Posterior vena cava (tissue), 2 donors: ENCODE measurements at regions of chr5 and their contacts with region 1.

Region 1: DNA sequence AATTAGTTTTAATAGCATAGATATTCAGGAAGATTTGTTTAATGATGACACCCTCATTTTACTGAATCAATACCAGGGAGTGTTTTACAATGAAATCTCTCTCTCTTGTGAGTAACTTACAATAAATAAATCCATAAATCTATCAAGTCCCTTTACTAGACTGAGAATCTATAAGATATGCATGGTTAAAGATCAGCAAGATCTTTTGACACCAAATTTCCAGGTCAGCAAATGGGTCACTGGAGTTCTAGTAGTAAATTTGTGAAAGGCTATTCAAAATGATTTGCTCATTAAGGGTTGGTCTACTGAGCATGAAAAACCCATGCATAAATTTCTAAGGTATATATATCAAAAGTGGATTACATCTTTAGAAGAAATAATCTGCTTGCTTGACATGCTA is 512.1 kb upstream of the ITGA1 start:
- DNase-seq: no peak

Region 2: GRCh38 chr5:51389582-51390541 is 885.8 kb before region 1 on chr5:
- intact Hi-C with region 1: loop called in 1 of 2 experiments (anchors 5 kb)
- DNase-seq: peak; percentile 74

Region 3: GRCh38 chr5:51468196-51468595 is 807.4 kb before region 1 on chr5:
- intact Hi-C with region 1: no loop called
- DNase-seq: no peak

Region 4: GRCh38 chr5:52748590-52748989 is 473.0 kb after region 1 on chr5:
- intact Hi-C with region 1: no loop called
- DNase-seq: no peak